ENCODE measurements at regions of chr3 and their contacts with region 1.

Region 1: GRCh38 chr3:64908292-64908691 is 220.5 kb upstream of the ADAMTS9 start:
- DNase-seq: no peak
- ATAC-seq: peak; percentile 76 to 85

Region 2: DNA sequence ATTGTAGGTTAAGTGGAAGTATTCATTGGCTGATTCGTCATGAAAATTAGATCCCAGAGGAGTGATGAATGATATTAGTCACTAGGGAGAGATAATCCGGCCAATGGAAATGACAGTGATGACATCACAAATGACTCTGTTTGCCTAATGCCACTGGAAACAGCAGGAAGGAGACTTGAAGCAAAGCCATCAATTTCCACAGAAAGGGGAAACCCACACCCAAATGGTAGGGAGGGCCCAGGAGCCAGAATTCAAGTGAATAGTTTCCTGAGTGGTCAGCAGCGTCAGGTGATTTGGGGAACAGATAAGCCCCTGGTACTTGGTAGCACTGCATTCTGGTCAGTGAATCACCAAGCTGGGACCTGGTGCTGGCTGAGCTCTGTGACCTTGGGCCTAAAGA is 217.2 kb before region 1 on chr3:
- intact Hi-C with region 1: loop called (anchors 5 to 10 kb)
- DNase-seq: peak; percentile 46
- ATAC-seq: peak in 1 of 2 donors; percentile 9